GM12878 (cell line): ENCODE measurements at regions of chr13 and their contacts with region 1.

Region 1: DNA sequence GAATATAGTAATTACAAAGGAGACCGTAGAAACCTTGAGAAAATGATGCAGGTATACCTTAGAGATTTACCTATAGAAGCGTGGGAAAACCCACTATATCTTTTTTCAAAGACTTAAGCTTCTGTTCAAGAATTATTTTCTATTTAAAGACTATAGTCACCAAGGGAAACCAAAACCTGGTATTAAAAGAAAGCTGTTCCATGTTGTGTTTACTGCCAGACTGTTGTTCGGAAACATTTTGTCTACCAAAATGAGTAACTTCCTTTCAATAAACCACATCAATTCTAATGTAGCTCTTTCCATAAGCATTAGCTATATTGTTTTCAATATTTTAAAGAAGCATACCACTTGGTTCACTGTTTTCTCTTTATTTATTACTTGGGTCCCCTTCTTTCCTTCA is 182.9 kb upstream of the SLITRK6 start:
- DNase-seq: no peak
- ATAC-seq: peak; percentile 40
- H3K4me3 ChIP-seq: no peak overlapping the region
- H3K27ac ChIP-seq: no peak overlapping the region
- H3K4me1 ChIP-seq: no peaks in the 10 kb centered on the region
- H3K27me3 ChIP-seq: no peaks in the 10 kb centered on the region
- CTCF ChIP-seq: no peak
- EP300 ChIP-seq: no peak
- POLR2A ChIP-seq: no peak
- RAD21 ChIP-seq: no peak

Region 2: DNA sequence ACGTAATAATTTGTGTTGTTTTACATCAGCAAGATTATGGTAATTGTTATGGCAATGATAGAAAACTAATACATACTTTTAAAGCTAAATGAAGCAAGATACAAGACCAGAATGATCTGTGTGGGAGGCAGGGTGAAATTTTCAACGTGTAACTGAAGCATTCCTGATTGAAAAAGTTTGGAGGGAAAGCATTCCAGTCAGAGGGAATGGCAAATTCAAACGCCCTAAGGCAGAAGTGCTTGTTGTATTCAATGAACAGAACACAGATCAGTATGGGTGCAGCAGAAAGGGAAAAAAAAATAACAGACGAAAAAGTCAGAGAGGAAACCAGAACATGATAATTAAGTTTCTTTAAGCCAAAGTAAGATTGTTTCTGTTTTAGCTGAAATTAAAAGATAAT is 1171.3 kb before region 1 on chr13:
- CTCF ChIA-PET with region 1: no interaction called
- POLR2A ChIA-PET with region 1: no interaction called
- RAD21 ChIA-PET with region 1: no interaction called
- SMC1A ChIA-PET with region 1: no interaction called
- in situ Hi-C with region 1: no loop called
- intact Hi-C with region 1: no loop called
- DNase-seq: no peak
- ATAC-seq: no peak
- H3K4me3 ChIP-seq: no peak overlapping the region
- H3K27ac ChIP-seq: no peak overlapping the region
- H3K4me1 ChIP-seq: no peaks in the 10 kb centered on the region
- H3K27me3 ChIP-seq: no peaks in the 10 kb centered on the region
- CTCF ChIP-seq: no peak
- EP300 ChIP-seq: no peak
- POLR2A ChIP-seq: no peak
- RAD21 ChIP-seq: no peak

Region 3: GRCh38 chr13:85520445-85520844 is 461.7 kb before region 1 on chr13:
- CTCF ChIA-PET with region 1: no interaction called
- POLR2A ChIA-PET with region 1: no interaction called
- RAD21 ChIA-PET with region 1: no interaction called
- SMC1A ChIA-PET with region 1: no interaction called
- in situ Hi-C with region 1: no loop called
- intact Hi-C with region 1: no loop called
- DNase-seq: no peak
- ATAC-seq: no peak
- H3K4me3 ChIP-seq: no peak overlapping the region
- H3K27ac ChIP-seq: no peak overlapping the region
- H3K4me1 ChIP-seq: no peaks in the 10 kb centered on the region
- H3K27me3 ChIP-seq: no peaks in the 10 kb centered on the region
- CTCF ChIP-seq: no peak
- EP300 ChIP-seq: no peak
- POLR2A ChIP-seq: no peak
- RAD21 ChIP-seq: no peak

Region 4: DNA sequence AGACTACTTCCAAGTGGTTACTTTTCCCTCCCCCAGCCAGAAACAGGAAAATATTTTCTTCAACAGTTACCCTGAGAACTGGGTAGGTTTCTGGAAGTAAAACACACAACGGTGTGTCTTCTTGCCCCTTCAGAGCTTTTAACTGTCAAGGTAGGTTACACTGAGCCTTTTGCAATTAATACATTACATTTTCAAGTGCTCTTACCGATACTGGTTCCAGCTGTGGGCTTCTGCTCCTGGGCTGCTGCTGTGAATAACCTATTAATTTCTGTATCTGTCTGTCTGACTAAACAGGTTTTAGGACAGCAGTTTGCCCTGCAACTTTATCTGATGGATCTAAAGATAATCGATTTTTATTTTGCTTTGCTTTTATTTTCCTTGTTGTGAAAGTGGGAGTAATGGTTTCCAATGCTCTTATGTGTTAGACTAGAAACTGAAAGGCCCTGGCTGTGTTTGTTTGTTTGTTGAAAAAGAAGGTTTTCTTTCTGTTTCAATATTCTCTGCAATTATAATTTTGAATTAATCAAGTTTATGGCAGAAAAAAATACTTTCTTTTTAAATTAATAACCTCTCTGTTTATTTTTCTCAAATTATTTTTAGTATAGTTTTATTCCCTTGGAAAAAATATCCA is 13.8 kb after region 1 on chr13:
- CTCF ChIA-PET with region 1: interaction called, 5 read pairs
- POLR2A ChIA-PET with region 1: no interaction called
- RAD21 ChIA-PET with region 1: interaction called, 23 read pairs
- SMC1A ChIA-PET with region 1: interaction called, 9 read pairs
- in situ Hi-C with region 1: no loop called
- intact Hi-C with region 1: no loop called
- DNase-seq: no peak
- ATAC-seq: peak; percentile 64
- H3K4me3 ChIP-seq: no peak overlapping the region
- H3K27ac ChIP-seq: no peak overlapping the region
- H3K4me1 ChIP-seq: no peaks in the 10 kb centered on the region
- H3K27me3 ChIP-seq: no peaks in the 10 kb centered on the region
- CTCF ChIP-seq: no peak
- EP300 ChIP-seq: no peak
- POLR2A ChIP-seq: no peak
- RAD21 ChIP-seq: no peak